Cardiac septum (tissue), 1 donor: ENCODE measurements at regions of chr6 and their contacts with region 1.

Region 1: GRCh38 chr6:11496152-11497060 is 41.1 kb upstream of the TMEM170B start:
- DNase-seq: no peak

Region 2: DNA sequence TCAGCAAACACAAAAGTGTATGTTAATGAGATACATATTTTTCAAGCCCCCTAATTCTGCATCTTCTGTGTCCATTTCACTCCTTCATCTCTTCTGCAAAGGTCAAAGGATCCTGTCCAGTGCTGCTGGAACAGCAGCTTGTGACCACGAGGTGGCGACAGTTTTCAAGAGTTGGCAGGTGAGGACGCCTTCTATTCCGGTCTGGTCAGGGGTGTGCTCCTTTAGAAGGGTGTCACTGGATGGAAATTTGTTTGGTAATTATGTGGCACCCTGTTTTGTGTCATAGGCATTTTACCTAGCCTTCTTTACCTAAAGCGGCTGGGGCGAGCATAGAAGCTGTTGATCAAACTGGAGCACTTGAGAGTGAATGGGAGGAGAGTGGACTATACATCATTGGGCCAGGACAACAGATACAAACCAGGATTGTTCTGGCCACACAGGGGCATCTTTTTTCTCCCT is 352.0 kb before region 1 on chr6:
- intact Hi-C with region 1: loop called (anchors 1 kb)
- DNase-seq: peak; percentile 91

Region 3: DNA sequence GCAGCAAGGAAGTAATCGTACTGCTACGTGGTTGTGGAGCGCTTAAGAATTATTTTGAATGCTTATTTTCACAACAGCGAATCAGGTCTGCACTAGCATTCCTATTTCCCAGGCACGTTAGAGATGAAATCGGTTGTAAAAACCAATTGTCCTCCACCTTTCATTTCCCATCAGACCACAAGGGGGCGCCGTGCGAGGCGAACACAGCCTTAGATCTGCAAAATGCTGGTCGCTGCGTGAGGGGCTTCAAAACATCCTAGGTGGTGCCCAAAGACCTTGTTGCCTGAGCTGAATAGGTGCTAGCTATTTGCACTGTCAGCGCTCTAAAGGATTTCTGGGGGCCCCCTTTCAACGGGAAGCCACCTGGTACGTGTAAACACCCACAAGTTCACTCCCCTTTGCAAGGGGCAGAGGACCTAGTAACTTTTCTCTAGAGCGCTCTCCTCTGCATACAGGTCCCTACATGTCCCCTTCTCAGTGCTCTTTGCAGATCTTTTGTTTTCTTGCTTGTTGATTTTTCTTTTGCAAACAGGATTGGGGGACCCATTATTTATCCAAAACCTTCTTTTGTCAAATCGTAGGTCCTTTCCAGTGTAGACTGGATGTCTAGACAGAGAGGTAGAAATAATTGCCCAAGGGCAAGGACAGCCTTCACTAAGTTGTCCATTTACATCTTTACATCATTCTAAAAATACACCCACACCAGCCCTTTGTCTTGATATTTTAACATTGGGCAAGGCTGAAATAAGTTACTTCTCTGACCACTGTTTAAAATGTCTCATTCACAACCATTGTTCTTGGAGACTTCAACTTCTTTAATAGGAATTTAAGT is 323.7 kb before region 1 on chr6:
- intact Hi-C with region 1: loop called (anchors 1 kb)
- DNase-seq: peak; percentile 84

Region 4: GRCh38 chr6:11241793-11242201 is 254.6 kb before region 1 on chr6:
- intact Hi-C with region 1: loop called (anchors 5 kb)
- DNase-seq: peak; percentile 79

Region 5: DNA sequence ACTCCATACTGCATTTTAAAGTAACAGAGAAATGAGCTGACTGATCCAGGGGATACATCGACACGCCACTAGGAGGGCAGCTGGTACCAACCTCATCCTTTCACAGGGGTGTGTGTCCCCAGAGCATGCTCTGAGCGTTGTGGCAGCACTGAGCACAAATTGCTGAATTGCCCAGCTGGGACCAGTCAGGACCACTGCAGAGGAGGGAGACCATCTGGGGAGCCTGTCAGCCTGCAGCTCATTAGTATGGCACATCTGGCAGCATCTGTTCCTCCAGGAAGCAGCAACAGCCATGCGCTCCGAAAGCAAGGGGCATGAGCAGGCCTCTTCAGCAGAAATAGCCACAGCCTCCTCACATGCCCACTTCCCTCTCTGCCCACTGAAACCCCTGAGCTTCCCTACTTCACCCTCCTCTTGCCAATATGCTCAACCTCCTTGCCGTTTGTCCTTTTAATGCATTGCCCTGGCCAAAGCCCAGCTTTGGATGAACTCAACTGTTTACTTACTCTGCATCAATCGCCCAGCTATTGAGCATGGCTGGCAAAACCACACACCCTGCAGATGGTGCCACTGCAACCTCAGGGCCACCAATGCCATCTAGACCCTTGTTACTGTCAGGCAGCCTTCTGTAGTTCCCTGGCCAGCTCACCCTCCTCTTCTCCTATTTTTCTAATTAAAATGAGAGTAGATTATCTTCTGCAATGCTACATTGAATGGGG is 186.3 kb before region 1 on chr6:
- intact Hi-C with region 1: no loop called
- DNase-seq: no peak

Region 6: GRCh38 chr6:11366183-11366933 is 130.0 kb before region 1 on chr6:
- intact Hi-C with region 1: no loop called
- DNase-seq: no peak

Region 7: GRCh38 chr6:11439886-11440285 is 56.5 kb before region 1 on chr6:
- intact Hi-C with region 1: loop called (anchors 2 kb)
- DNase-seq: no peak

Region 8: DNA sequence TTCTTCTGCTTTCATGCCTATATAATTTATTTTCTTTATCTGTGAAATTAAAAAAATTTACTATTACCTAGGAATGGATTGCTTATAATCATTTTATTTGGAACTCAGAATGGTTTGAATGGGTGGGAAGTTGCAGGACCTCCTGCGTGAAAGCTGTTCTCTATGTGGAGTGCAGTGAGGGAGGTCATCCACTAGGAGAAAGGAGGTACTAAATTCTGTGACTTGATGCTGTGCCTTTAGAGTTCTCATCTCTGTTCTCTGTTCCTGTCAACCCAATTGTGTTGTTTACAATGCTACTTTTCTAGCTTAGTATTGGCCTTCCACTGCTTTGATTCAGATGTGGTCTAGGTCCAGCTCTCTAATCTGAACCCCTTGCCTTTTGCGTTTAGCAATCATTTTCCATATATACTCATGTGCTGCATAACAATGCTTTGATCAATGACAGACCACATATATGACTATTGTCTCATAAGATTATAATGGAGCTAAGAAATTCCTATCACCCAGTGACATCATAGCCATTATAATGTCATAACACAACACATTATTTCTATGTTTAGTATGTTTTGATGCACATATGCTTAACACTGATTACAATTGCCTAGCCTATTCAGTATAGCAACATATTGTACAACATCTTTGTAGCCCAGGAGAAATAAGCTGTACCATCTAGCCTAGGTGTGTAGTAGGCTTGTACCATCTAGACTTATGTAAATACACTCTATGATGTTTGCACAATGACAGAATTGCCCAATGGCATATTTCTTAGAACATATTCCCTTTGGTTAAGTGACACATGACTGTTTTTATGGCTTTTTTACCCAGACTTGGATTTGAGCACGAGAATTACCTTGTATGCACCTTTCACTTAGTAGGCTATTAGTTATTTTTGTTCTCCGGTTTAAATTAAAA is 450.9 kb after region 1 on chr6:
- intact Hi-C with region 1: no loop called
- DNase-seq: no peak